PC-9 (cell line): ENCODE measurements at regions of chr4 and their contacts with region 1.

Region 1: GRCh38 chr4:184538023-184538599 is 63.8 kb upstream of the IRF2 start:
- DNase-seq: peak; percentile 65 to 71
- H3K4me3 ChIP-seq: peak overlapping the region; percentile 67
- H3K27ac ChIP-seq: peak overlapping the region; percentile 66
- H3K4me1 ChIP-seq: no peaks in the 10 kb centered on the region; the same call in 1 of the 2 replicates
- H3K27me3 ChIP-seq: no peaks in the 10 kb centered on the region
- CTCF ChIP-seq: peak; percentile 67

Region 2: GRCh38 chr4:183808097-183808456 is 730.0 kb before region 1 on chr4:
- CTCF ChIA-PET with region 1: no interaction called
- POLR2A ChIA-PET with region 1: no interaction called
- intact Hi-C with region 1: no loop called
- DNase-seq: no peak
- H3K4me3 ChIP-seq: no peak overlapping the region
- H3K27ac ChIP-seq: no peak overlapping the region
- H3K4me1 ChIP-seq: no peaks in the 10 kb centered on the region
- H3K27me3 ChIP-seq: no peaks in the 10 kb centered on the region
- CTCF ChIP-seq: no peak

Region 3: DNA sequence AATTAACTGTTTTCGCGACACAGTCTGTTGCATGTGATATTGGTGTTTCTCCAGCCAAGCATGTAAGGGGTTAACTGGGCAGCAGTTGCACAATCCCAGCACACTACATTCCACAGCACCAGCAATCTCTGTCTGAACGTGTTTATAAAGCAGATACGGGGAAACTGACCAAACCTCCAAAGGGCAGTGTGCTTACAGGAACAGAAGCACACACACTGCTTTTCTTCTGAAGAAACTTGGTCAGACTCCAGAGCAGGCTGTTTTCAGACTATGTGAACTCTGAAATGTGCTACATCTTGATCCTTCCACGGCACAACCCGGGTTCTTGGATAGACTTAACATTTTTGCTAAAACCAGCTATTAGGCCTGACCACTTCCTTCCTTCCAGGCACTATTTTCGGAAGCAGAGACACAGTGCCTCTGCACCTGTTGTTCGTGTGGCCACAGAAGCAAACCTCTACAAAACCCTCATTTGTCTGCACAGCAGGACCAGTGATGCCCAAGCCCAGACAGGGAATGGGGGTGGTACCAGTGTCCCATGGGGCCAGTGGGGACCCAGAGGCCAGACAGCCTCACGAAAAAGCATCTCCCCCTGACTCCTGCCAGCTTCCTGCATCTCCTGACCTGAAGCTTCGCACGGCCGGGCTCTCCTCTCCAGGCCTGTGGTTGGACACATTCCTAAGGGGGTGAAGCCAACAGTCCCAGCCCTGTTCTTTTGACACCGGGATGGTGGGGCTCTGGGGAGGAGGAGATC is 153.9 kb before region 1 on chr4:
- CTCF ChIA-PET with region 1: no interaction called
- POLR2A ChIA-PET with region 1: no interaction called
- intact Hi-C with region 1: loop called (anchors 1 kb)
- DNase-seq: peak; percentile 44 to 74
- H3K4me3 ChIP-seq: peak overlapping the region; percentile 59; the same call in 1 of the 2 replicates
- H3K27ac ChIP-seq: peak overlapping the region; percentile 96
- H3K4me1 ChIP-seq: peaks cover 41% of the 10 kb centered on the region
- H3K27me3 ChIP-seq: no peaks in the 10 kb centered on the region
- CTCF ChIP-seq: no peak

Region 4: GRCh38 chr4:184722798-184723197 is 184.7 kb after region 1 on chr4:
- CTCF ChIA-PET with region 1: no interaction called
- POLR2A ChIA-PET with region 1: interaction called, 23 read pairs
- intact Hi-C with region 1: no loop called
- DNase-seq: no peak
- H3K4me3 ChIP-seq: no peak overlapping the region
- H3K27ac ChIP-seq: no peak overlapping the region
- H3K4me1 ChIP-seq: no peaks in the 10 kb centered on the region
- H3K27me3 ChIP-seq: no peaks in the 10 kb centered on the region
- CTCF ChIP-seq: 0 out of 2 replicates have a peak, but pooled peaks have one; percentile 23